CD4-positive, alpha-beta T cell (primary cell): ENCODE measurements at regions of chr1 and their contacts with region 1.

Region 1: GRCh38 chr1:211680752-211681327 is 5.4 kb upstream of the NEK2 start:
- DNase-seq: peak; percentile 54 to 93 (median 68)
- ATAC-seq: peak; percentile 90
- H3K4me3 ChIP-seq: no peak overlapping the region
- H3K4me3 Mint-ChIP-seq: no peak overlapping the region
- H3K27ac ChIP-seq: peak overlapping the region; percentile 51 to 66
- H3K27ac Mint-ChIP-seq: peak overlapping the region; percentile 81
- H3K4me1 ChIP-seq: peaks cover 9% of the 10 kb centered on the region
- H3K4me1 Mint-ChIP-seq: peaks cover 11% of the 10 kb centered on the region
- H3K27me3 ChIP-seq: no peaks in the 10 kb centered on the region
- H3K27me3 Mint-ChIP-seq: no peaks in the 10 kb centered on the region
- CTCF ChIP-seq: peak; percentile 84

Region 2: GRCh38 chr1:210222340-210223006 is 1458.4 kb before region 1 on chr1:
- CTCF ChIA-PET with region 1: no interaction called
- POLR2A ChIA-PET with region 1: no interaction called
- intact Hi-C with region 1: no loop called
- DNase-seq: no peak
- ATAC-seq: no peak
- H3K4me3 ChIP-seq: no peak overlapping the region
- H3K4me3 Mint-ChIP-seq: no peak overlapping the region
- H3K27ac ChIP-seq: no peak overlapping the region
- H3K27ac Mint-ChIP-seq: no peak overlapping the region
- H3K4me1 ChIP-seq: no peaks in the 10 kb centered on the region
- H3K4me1 Mint-ChIP-seq: no peaks in the 10 kb centered on the region
- H3K27me3 ChIP-seq: peaks cover 5% of the 10 kb centered on the region in 2 experiments
- H3K27me3 Mint-ChIP-seq: peaks cover 37% of the 10 kb centered on the region
- CTCF ChIP-seq: no peak

Region 3: DNA sequence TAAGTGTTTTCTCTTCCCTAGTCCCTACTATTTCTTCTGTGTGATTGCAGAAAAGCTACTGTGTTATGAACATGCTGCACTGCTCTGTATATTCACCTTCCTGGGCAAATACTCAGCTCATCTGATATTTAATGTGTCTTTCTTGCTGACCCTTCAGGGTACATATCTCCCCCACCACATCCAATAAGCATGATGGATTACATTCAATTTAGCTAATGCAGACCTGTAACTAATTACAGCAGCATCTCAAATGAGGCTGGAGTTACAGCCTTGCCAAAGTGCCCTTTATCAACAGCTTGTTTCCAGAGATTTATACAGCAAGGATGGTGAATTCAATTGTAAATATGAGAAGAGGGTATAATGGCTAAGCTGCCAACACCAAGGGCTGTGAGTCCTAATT is 690.9 kb before region 1 on chr1:
- CTCF ChIA-PET with region 1: no interaction called
- POLR2A ChIA-PET with region 1: no interaction called
- intact Hi-C with region 1: no loop called
- DNase-seq: no peak
- ATAC-seq: no peak
- H3K4me3 ChIP-seq: no peak overlapping the region
- H3K4me3 Mint-ChIP-seq: no peak overlapping the region
- H3K27ac ChIP-seq: no peak overlapping the region
- H3K27ac Mint-ChIP-seq: no peak overlapping the region
- H3K4me1 ChIP-seq: no peaks in the 10 kb centered on the region
- H3K4me1 Mint-ChIP-seq: no peaks in the 10 kb centered on the region
- H3K27me3 ChIP-seq: peaks cover 3 to 5% of the 10 kb centered on the region in 2 experiments
- H3K27me3 Mint-ChIP-seq: peaks cover 56% of the 10 kb centered on the region
- CTCF ChIP-seq: no peak

Region 4: GRCh38 chr1:211068976-211069375 is 611.9 kb before region 1 on chr1:
- CTCF ChIA-PET with region 1: no interaction called
- POLR2A ChIA-PET with region 1: no interaction called
- intact Hi-C with region 1: no loop called
- DNase-seq: no peak
- ATAC-seq: no peak
- H3K4me3 ChIP-seq: no peak overlapping the region
- H3K4me3 Mint-ChIP-seq: no peak overlapping the region
- H3K27ac ChIP-seq: no peak overlapping the region
- H3K27ac Mint-ChIP-seq: no peak overlapping the region
- H3K4me1 ChIP-seq: no peaks in the 10 kb centered on the region
- H3K4me1 Mint-ChIP-seq: no peaks in the 10 kb centered on the region
- H3K27me3 ChIP-seq: no peaks in the 10 kb centered on the region
- H3K27me3 Mint-ChIP-seq: peaks cover 7% of the 10 kb centered on the region
- CTCF ChIP-seq: no peak

Region 5: GRCh38 chr1:211708006-211708405 is 27.2 kb after region 1 on chr1:
- CTCF ChIA-PET with region 1: no interaction called
- POLR2A ChIA-PET with region 1: no interaction called
- intact Hi-C with region 1: no loop called
- DNase-seq: no peak
- ATAC-seq: no peak
- H3K4me3 ChIP-seq: no peak overlapping the region
- H3K4me3 Mint-ChIP-seq: no peak overlapping the region
- H3K27ac ChIP-seq: no peak overlapping the region
- H3K27ac Mint-ChIP-seq: no peak overlapping the region
- H3K4me1 ChIP-seq: no peaks in the 10 kb centered on the region
- H3K4me1 Mint-ChIP-seq: no peaks in the 10 kb centered on the region
- H3K27me3 ChIP-seq: no peaks in the 10 kb centered on the region
- H3K27me3 Mint-ChIP-seq: no peaks in the 10 kb centered on the region
- CTCF ChIP-seq: no peak

Region 6: DNA sequence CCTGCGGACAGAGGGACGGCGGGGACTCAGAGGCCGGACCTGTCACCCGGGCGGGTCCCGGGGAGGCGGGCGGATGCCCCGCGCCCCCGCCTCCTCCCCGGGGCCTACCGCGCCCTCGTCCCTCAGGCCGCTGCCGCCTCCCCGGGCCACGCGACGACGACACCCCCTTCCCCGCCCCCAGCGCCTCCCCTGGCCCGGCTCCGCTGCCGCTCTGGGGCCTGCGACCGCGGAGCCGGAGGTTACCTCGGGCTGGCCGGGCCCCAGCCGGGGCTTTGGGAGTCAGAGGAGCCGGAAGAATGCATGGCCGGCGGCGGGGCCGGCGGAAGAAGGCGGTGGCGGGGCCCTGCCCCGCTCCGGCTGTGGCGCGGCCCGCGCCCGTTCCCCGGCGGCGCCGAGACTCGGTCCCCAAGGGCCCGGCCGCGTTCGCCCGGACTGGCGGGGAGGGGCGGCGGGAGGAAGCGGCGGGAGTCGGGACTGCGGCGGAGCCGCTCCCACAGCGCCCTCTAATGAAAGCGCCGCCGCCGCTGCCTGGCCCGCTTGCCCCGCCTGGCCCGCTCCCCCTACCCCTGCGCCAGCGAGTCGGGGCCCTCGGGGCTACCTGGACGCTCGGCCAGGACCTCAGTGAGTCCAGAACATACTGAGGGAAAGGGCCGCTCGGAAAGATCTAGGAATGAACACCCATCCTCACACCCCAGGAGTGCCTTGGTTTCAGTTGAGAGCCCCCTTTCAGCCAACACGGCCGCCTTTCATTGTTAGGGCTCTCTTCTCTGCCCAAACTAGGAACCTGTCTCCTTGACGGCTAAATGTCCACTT is 149.7 kb after region 1 on chr1 and contains the start of gene LPGAT1:
- CTCF ChIA-PET with region 1: interaction called, 3 read pairs
- POLR2A ChIA-PET with region 1: no interaction called
- intact Hi-C with region 1: loop called in 1 of 2 experiments (anchors 2 kb)
- DNase-seq: peak; percentile 47 to 85 (median 64)
- ATAC-seq: peak; percentile 82
- H3K4me3 ChIP-seq: peak within 1 kb of the TSS; percentile 82
- H3K4me3 Mint-ChIP-seq: peak within 1 kb of the TSS; percentile 95
- H3K27ac ChIP-seq: peak within 1 kb of the TSS in 1 of 2 donors; percentile 66
- H3K27ac Mint-ChIP-seq: peak within 1 kb of the TSS; percentile 84
- H3K4me1 ChIP-seq: peaks cover 42% of the 10 kb centered on the region
- H3K4me1 Mint-ChIP-seq: peaks cover 68% of the 10 kb centered on the region
- H3K27me3 ChIP-seq: no peaks in the 10 kb centered on the region
- H3K27me3 Mint-ChIP-seq: no peaks in the 10 kb centered on the region
- CTCF ChIP-seq: peak; percentile 62
- total RNA-seq, gene LPGAT1: 14.0 to 14.4 TPM

Region 7: DNA sequence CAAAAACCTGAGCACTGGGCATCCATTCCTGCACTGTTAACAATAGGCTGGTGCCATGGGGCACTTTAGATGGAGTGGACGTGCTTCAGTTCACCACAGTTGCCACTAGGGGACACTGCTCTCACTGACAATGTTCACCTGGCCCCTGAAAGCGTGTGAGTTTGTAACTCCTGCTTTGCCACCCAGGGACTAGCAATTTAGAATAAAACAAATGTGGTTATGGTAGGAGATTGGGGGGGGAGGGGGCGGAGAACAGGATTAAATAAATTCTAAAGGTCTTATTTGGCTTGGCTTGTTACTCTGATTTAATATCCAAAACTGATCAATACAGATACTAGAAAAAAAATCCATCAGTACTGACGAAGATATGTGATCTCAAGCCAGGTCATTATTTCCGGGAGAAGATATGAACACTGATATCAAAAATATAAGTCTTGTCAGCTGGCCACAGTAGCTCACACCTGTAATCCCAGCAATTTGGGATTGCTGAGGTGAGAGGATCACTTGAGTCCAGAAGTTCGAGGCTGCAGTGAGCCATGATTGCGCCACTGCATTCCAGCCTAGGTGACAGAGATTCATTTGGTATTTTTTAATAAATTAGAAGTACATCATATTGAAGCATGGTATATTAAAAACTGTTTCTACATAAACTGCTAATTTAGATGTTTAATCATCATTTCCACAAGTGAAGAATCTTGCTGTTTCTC is 331.3 kb after region 1 on chr1:
- CTCF ChIA-PET with region 1: no interaction called
- POLR2A ChIA-PET with region 1: no interaction called
- intact Hi-C with region 1: loop called in 1 of 2 experiments (anchors 5 kb)
- DNase-seq: peak; percentile 39 to 80 (median 51)
- ATAC-seq: peak; percentile 100
- H3K4me3 ChIP-seq: no peak overlapping the region
- H3K4me3 Mint-ChIP-seq: no peak overlapping the region
- H3K27ac ChIP-seq: no peak overlapping the region
- H3K27ac Mint-ChIP-seq: no peak overlapping the region
- H3K4me1 ChIP-seq: no peaks in the 10 kb centered on the region
- H3K4me1 Mint-ChIP-seq: no peaks in the 10 kb centered on the region
- H3K27me3 ChIP-seq: no peaks in the 10 kb centered on the region
- H3K27me3 Mint-ChIP-seq: no peaks in the 10 kb centered on the region
- CTCF ChIP-seq: peak; percentile 89

Region 8: DNA sequence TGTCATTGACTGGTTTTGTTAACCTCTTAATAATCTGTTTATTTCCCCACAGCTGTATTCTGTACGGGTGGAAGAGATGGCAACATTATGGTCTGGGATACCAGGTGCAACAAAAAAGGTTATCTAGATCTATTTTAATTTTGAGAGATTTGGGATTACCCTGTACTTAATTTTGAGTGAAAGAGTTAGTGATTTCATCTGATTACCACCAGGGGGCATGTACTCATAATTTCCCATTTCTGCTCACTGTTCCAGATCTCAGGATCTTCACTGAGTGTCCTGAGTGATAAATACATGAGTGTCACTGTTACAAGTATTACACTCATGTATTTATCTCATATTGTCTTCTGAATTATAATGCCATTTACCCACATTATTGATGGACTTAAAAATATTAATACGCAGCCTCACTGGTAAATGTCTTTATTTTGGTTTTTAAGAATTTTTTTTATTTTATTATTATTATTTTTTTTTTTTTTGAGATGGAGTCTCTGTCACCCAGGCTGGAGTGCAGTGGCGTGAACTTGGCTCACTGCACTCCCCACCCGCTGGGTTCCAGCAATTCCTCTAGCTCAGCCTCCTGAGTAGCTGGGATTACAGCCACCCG is 382.1 kb after region 1 on chr1:
- CTCF ChIA-PET with region 1: no interaction called
- POLR2A ChIA-PET with region 1: no interaction called
- intact Hi-C with region 1: loop called (anchors 5 kb)
- DNase-seq: peak in 3 of 14 experiments; percentile 47 to 57 (median 55)
- ATAC-seq: peak; percentile 69
- H3K4me3 ChIP-seq: no peak overlapping the region
- H3K4me3 Mint-ChIP-seq: no peak overlapping the region
- H3K27ac ChIP-seq: no peak overlapping the region
- H3K27ac Mint-ChIP-seq: no peak overlapping the region
- H3K4me1 ChIP-seq: no peaks in the 10 kb centered on the region
- H3K4me1 Mint-ChIP-seq: no peaks in the 10 kb centered on the region
- H3K27me3 ChIP-seq: no peaks in the 10 kb centered on the region
- H3K27me3 Mint-ChIP-seq: no peaks in the 10 kb centered on the region
- CTCF ChIP-seq: peak; percentile 80

Region 9: DNA sequence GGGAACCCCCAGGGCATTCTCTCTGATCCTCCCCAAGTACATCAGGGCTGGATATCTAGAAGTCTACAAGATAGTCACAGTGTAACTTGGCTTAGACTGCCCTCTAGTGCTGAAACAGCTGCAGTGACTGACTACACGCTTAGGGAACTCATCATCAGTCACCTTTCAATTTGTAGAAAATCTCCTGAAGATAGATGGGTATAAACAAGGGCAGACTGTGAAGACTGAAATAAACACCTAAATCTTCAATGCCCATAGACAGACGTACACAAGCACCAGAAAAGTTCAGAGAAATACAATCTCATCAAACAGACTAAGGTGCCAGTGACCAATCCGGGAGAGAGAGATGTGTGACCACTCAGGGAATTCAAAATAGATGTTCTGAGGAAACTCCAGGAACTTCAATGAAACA is 687.2 kb after region 1 on chr1:
- CTCF ChIA-PET with region 1: interaction called, 5 read pairs
- POLR2A ChIA-PET with region 1: no interaction called
- intact Hi-C with region 1: loop called (anchors 1 to 5 kb)
- DNase-seq: peak in 13 of 14 experiments; percentile 17 to 81 (median 25)
- ATAC-seq: peak; percentile 95
- H3K4me3 ChIP-seq: no peak overlapping the region
- H3K4me3 Mint-ChIP-seq: no peak overlapping the region
- H3K27ac ChIP-seq: no peak overlapping the region
- H3K27ac Mint-ChIP-seq: no peak overlapping the region
- H3K4me1 ChIP-seq: no peaks in the 10 kb centered on the region
- H3K4me1 Mint-ChIP-seq: peaks cover 5% of the 10 kb centered on the region
- H3K27me3 ChIP-seq: no peaks in the 10 kb centered on the region
- H3K27me3 Mint-ChIP-seq: no peaks in the 10 kb centered on the region
- CTCF ChIP-seq: peak; percentile 69